Prostate gland (tissue), 2 donors: ENCODE measurements at regions of chr4 and their contacts with region 1.

Region 1: GRCh38 chr4:99054428-99054994 is 34.1 kb downstream of the ADH5 start:
- DNase-seq: no peak
- H3K4me3 ChIP-seq: no peak overlapping the region
- H3K27ac ChIP-seq: no peak overlapping the region
- H3K4me1 ChIP-seq: peaks cover 2% of the 10 kb centered on the region
- H3K27me3 ChIP-seq: no peaks in the 10 kb centered on the region
- CTCF ChIP-seq: no peak
- POLR2A ChIP-seq: no peak

Region 2: GRCh38 chr4:98467627-98468072 is 586.9 kb before region 1 on chr4:
- intact Hi-C with region 1: loop called (anchors 10 kb)
- DNase-seq: peak; percentile 75
- H3K4me3 ChIP-seq: peak overlapping the region; percentile 14 to 24
- H3K27ac ChIP-seq: no peak overlapping the region
- H3K4me1 ChIP-seq: no peaks in the 10 kb centered on the region
- H3K27me3 ChIP-seq: no peaks in the 10 kb centered on the region
- CTCF ChIP-seq: peak; percentile 61 to 77 (median 76)
- POLR2A ChIP-seq: no peak

Region 3: GRCh38 chr4:98794565-98795205 is 259.8 kb before region 1 on chr4:
- intact Hi-C with region 1: no loop called
- DNase-seq: no peak
- H3K4me3 ChIP-seq: no peak overlapping the region
- H3K27ac ChIP-seq: no peak overlapping the region
- H3K4me1 ChIP-seq: no peaks in the 10 kb centered on the region
- H3K27me3 ChIP-seq: no peaks in the 10 kb centered on the region
- CTCF ChIP-seq: no peak
- POLR2A ChIP-seq: no peak

Region 4: DNA sequence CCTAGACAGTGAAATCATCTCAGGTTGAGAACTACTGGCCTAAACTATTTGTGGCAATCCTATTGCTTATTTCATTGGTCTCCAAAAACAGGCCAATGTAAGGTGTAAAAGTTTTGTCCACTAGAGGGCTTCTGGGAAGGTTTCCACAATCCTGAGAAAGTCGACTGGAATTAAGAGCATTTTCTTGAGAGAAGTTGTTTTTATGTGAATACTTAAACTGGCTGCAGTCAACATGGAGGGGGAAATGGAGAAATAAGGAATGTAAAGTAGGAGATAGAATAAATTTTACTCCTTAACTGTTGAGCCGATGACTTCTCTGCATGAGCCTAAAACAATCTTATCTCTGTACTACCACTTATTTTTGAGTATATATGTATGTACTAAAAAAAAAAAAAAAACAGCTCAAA is 114.6 kb before region 1 on chr4:
- intact Hi-C with region 1: loop called (anchors 5 kb)
- DNase-seq: peak; percentile 8
- H3K4me3 ChIP-seq: no peak overlapping the region
- H3K27ac ChIP-seq: no peak overlapping the region
- H3K4me1 ChIP-seq: no peaks in the 10 kb centered on the region
- H3K27me3 ChIP-seq: no peaks in the 10 kb centered on the region
- CTCF ChIP-seq: peak; percentile 31 to 56 (median 54)
- POLR2A ChIP-seq: no peak

Region 5: DNA sequence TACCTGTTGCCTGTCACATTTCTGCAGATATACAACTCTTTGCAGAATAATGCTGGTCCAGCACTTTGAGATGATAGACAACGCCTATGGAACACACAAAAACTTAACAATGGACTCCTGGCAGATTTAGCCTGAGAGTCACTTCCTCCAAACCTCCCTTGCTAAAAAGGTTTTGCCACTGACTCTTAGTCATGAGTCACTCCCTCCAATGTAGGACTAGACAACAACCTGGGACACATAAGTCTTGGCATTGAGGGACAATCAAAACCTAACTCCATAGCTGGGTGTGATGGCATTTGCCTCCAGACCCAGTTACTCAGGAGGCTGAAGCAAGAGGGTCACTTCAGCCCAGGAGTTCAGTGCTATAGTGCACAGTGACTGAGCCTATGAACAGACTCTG is 103.6 kb before region 1 on chr4:
- intact Hi-C with region 1: no loop called
- DNase-seq: no peak
- H3K4me3 ChIP-seq: no peak overlapping the region
- H3K27ac ChIP-seq: no peak overlapping the region
- H3K4me1 ChIP-seq: no peaks in the 10 kb centered on the region
- H3K27me3 ChIP-seq: no peaks in the 10 kb centered on the region
- CTCF ChIP-seq: no peak
- POLR2A ChIP-seq: no peak

Region 6: GRCh38 chr4:98995183-98996055 is 59.1 kb before region 1 on chr4 and contains the start of gene METAP1:
- intact Hi-C with region 1: loop called (anchors 2 kb)
- DNase-seq: peak; percentile 98
- H3K4me3 ChIP-seq: peak within 1 kb of the TSS; percentile 90 to 94
- H3K27ac ChIP-seq: peak within 1 kb of the TSS; percentile 91 to 93
- H3K4me1 ChIP-seq: no peaks in the 10 kb centered on the region
- H3K27me3 ChIP-seq: no peaks in the 10 kb centered on the region
- CTCF ChIP-seq: peak; percentile 36 to 96 (median 90)
- POLR2A ChIP-seq: peak; percentile 82
- total RNA-seq, gene METAP1: 55.3 to 70.1 TPM

Region 7: DNA sequence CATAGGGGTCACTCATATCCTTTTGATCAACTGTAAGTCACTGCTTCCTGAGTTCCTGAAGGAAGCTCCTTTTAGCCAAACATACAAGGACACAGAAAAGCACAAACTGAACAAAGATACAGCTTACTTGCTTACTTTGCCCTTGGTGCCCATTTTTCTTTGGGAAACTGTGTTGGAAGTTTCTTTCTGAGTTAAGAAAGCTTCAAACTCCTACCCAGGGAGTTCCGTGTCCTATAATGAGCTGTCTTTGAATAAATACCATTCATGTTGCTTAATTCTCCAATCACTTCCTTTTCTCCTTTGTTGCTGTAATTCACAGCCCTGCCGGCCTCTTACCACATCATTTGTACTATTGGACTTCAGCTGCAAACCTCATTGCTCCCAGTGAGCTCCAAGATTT is 89.6 kb after region 1 on chr4 and contains the start of gene ADH4:
- intact Hi-C with region 1: no loop called
- DNase-seq: no peak
- H3K4me3 ChIP-seq: no peak within 1 kb of the TSS
- H3K27ac ChIP-seq: no peak within 1 kb of the TSS
- H3K4me1 ChIP-seq: no peaks in the 10 kb centered on the region
- H3K27me3 ChIP-seq: no peaks in the 10 kb centered on the region
- CTCF ChIP-seq: no peak
- POLR2A ChIP-seq: no peak
- total RNA-seq, gene ADH4: not detected